ENCODE measurements at regions of chr9 and their contacts with region 1.

Region 1: GRCh38 chr9:91546574-91546973 is 122.9 kb upstream of the NFIL3 start:
- DNase-seq: no peak

Region 2: GRCh38 chr9:91515074-91515687 is 31.4 kb before region 1 on chr9:
- intact Hi-C with region 1: loop called in 1 of 2 experiments (anchors 1 kb)
- DNase-seq: no peak

Region 3: DNA sequence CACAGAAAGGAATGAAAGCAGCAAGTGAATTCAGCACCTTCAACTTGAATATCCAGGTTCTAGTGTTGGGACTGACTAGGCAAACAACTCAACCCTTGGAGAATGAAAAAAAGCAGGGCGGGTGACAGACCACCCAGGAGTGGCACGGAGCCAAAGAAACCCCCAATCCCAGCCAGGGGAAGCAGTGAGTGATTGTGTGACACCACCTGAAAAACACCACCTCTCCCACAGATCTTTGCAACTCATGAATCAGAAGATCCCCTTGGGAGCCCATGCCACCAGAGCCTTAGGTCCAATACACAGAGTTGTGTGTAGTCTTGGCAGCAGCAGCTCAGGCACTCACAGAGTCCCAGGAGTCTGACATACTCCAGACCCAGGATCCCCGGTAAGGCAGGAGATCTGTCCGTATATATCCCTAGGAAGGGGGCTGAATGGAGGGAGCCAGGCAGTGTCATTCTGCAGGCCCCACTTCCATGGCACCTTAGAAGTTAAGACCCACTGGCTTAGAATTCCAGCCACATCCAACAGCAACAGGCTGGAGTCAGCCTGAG is 425.6 kb after region 1 on chr9:
- intact Hi-C with region 1: loop called in 1 of 2 experiments (anchors 5 kb)
- DNase-seq: no peak

Region 4: DNA sequence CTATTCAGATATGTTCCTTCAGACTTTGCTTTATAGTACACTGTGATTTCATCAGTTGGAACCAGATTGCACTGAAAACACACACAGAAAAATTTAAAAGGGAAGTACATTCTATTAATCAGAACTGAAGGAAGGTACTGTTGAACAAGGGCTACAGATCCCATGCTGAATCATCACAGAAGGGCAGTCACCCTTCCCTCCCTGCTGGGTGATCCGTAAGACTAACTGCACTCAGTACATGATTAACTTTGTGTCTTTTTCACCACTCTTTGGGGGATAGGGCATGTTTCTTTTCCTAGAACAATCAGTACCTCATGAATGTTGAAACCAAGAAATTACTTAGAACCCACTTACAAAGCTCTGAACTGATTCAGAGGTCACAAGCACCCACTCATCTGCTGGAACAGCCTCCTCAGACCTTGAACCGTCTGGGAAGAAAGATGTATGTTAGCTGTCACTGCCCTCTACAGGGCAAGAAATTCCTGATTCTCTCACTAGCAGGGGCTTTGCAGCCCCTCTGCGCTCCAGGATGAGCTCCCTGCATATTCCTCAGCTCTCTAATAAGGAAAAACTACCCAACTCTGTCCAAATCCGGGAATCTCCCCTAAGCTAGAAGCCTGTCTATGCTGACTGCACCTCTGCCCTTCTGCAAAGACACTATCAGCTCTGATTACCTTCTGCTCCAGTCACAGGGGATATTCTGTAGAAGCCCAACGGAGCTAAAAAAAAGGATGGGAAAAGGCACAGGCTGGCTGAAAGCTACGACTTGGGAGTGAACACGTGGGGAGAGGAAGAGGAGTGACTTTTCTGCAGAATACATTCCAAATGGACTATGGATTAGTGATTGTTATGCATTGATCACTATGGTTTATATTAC is 695.9 kb after region 1 on chr9:
- intact Hi-C with region 1: no loop called
- DNase-seq: no peak

Measured in posterior vena cava (tissue), 2 donors.